ENCODE measurements at regions of chr4 and their contacts with region 1.

Region 1: GRCh38 chr4:42627885-42628646 is 28.8 kb downstream of the ATP8A1 start:
- DNase-seq: peak; percentile 59
- CTCF ChIP-seq: no peak

Region 2: GRCh38 chr4:42638993-42639392 is 10.9 kb after region 1 on chr4:
- CTCF ChIA-PET with region 1: interaction called, 15 read pairs
- POLR2A ChIA-PET with region 1: interaction called, 4 read pairs
- DNase-seq: peak; percentile 57
- CTCF ChIP-seq: no peak